ENCODE measurements at regions of chr10 and their contacts with region 1.

Region 1: GRCh38 chr10:99430451-99431189 is at the start of gene GOT1:
- DNase-seq: peak; percentile 100
- H3K4me3 Mint-ChIP-seq: peak within 1 kb of the TSS; percentile 97
- H3K27ac Mint-ChIP-seq: peak within 1 kb of the TSS; percentile 93
- H3K4me1 Mint-ChIP-seq: peaks cover 17% of the 10 kb centered on the region
- H3K27me3 Mint-ChIP-seq: no peaks in the 10 kb centered on the region
- CTCF ChIP-seq: no peak
- total RNA-seq, gene GOT1: 163 and 184 TPM in 2 replicates

Region 2: GRCh38 chr10:99360934-99361333 is 69.7 kb before region 1 on chr10:
- CTCF ChIA-PET with region 1: no interaction called
- POLR2A ChIA-PET with region 1: no interaction called
- intact Hi-C with region 1: no loop called
- DNase-seq: no peak
- H3K4me3 Mint-ChIP-seq: no peak overlapping the region
- H3K27ac Mint-ChIP-seq: no peak overlapping the region
- H3K4me1 Mint-ChIP-seq: no peaks in the 10 kb centered on the region
- H3K27me3 Mint-ChIP-seq: peaks cover 33% of the 10 kb centered on the region
- CTCF ChIP-seq: no peak

Region 3: GRCh38 chr10:99395750-99396445 is 34.7 kb before region 1 on chr10:
- CTCF ChIA-PET with region 1: interaction called, 8 read pairs
- POLR2A ChIA-PET with region 1: interaction called, 7 read pairs
- intact Hi-C with region 1: loop called (anchors 1 kb)
- DNase-seq: peak; percentile 49
- H3K4me3 Mint-ChIP-seq: no peak overlapping the region
- H3K27ac Mint-ChIP-seq: no peak overlapping the region
- H3K4me1 Mint-ChIP-seq: peaks cover 33% of the 10 kb centered on the region
- H3K27me3 Mint-ChIP-seq: no peaks in the 10 kb centered on the region
- CTCF ChIP-seq: no peak

Region 4: GRCh38 chr10:99444383-99445045 is 13.9 kb after region 1 on chr10:
- CTCF ChIA-PET with region 1: interaction called, 14 read pairs
- POLR2A ChIA-PET with region 1: interaction called, 14 read pairs
- intact Hi-C with region 1: no loop called
- DNase-seq: no peak
- H3K4me3 Mint-ChIP-seq: no peak overlapping the region
- H3K27ac Mint-ChIP-seq: no peak overlapping the region
- H3K4me1 Mint-ChIP-seq: no peaks in the 10 kb centered on the region
- H3K27me3 Mint-ChIP-seq: peaks cover 27% of the 10 kb centered on the region
- CTCF ChIP-seq: no peak

Region 5: DNA sequence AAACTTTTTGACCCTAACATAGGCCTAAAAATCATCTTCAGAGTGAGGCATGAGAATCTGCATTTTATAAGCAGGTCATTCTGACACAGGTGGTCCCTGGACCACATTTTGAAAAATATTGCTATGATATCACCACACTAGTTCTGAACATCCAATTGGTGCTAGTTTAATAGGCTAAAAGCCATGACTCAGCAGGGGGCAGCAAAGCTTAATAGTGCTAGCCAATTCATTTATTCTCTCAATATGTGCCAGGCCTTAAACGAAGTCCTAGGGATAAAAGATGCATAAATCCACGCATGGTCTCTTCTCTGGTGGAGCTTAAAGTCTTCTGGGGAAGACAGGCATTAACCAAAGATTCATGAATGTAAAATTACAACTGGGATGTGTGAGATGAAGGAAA is 199.8 kb after region 1 on chr10:
- CTCF ChIA-PET with region 1: interaction called, 3 read pairs
- POLR2A ChIA-PET with region 1: interaction called, 11 read pairs
- intact Hi-C with region 1: no loop called
- DNase-seq: peak; percentile 73
- H3K4me3 Mint-ChIP-seq: no peak overlapping the region
- H3K27ac Mint-ChIP-seq: no peak overlapping the region
- H3K4me1 Mint-ChIP-seq: peaks cover 6% of the 10 kb centered on the region
- H3K27me3 Mint-ChIP-seq: no peaks in the 10 kb centered on the region
- CTCF ChIP-seq: peak; percentile 63

Region 6: GRCh38 chr10:99711129-99711719 is 280.6 kb after region 1 on chr10:
- CTCF ChIA-PET with region 1: interaction called, 26 read pairs
- POLR2A ChIA-PET with region 1: interaction called, 3 read pairs
- intact Hi-C with region 1: loop called (anchors 5 kb)
- DNase-seq: peak; percentile 65
- H3K4me3 Mint-ChIP-seq: no peak overlapping the region
- H3K27ac Mint-ChIP-seq: peak overlapping the region; percentile 2
- H3K4me1 Mint-ChIP-seq: peaks cover 8% of the 10 kb centered on the region
- H3K27me3 Mint-ChIP-seq: no peaks in the 10 kb centered on the region
- CTCF ChIP-seq: peak; percentile 53

Region 7: DNA sequence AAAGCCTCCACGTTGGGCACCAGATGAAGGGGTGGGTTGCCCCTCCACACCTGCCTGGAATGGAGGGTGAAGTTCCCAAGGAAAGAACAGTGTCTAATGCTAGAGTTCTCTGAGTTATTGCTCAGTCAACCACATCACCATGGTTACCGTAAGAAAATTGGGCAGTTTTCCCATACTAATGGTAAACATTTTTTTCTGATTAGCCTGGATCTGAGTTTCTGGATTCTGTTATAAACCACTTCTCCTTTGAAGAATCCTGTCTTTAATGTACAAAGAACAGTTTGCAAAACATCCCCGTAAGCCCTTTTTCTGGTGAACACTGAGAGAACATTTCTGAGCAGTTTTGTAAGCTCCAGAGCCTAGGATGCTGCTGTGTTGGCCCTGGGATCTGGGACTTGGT is 397.3 kb after region 1 on chr10:
- CTCF ChIA-PET with region 1: no interaction called
- POLR2A ChIA-PET with region 1: no interaction called
- intact Hi-C with region 1: no loop called
- DNase-seq: no peak
- H3K4me3 Mint-ChIP-seq: no peak overlapping the region
- H3K27ac Mint-ChIP-seq: no peak overlapping the region
- H3K4me1 Mint-ChIP-seq: no peaks in the 10 kb centered on the region
- H3K27me3 Mint-ChIP-seq: no peaks in the 10 kb centered on the region
- CTCF ChIP-seq: no peak

Measured in MCF 10A (cell line).